ENCODE measurements at regions of chr7 and their contacts with region 1.

Region 1: GRCh38 chr7:12686894-12687717 is at the start of gene ARL4A:
- DNase-seq: peak; percentile 99
- H3K4me3 ChIP-seq: peak within 1 kb of the TSS; percentile 83
- H3K4me3 Mint-ChIP-seq: peak within 1 kb of the TSS; percentile 93
- H3K27ac Mint-ChIP-seq: peak within 1 kb of the TSS; percentile 89
- H3K4me1 ChIP-seq: peaks cover 7% of the 10 kb centered on the region
- H3K4me1 Mint-ChIP-seq: peaks cover 19% of the 10 kb centered on the region
- H3K27me3 ChIP-seq: no peaks in the 10 kb centered on the region
- H3K27me3 Mint-ChIP-seq: no peaks in the 10 kb centered on the region
- CTCF ChIP-seq: peak in 1 of 2 experiments; percentile 61
- total RNA-seq, gene ARL4A: 40.6 and 42.5 TPM in 2 replicates

Region 2: GRCh38 chr7:12557282-12557681 is 129.8 kb before region 1 on chr7:
- CTCF ChIA-PET with region 1: no interaction called
- POLR2A ChIA-PET with region 1: no interaction called
- intact Hi-C with region 1: no loop called
- DNase-seq: no peak
- H3K4me3 ChIP-seq: no peak overlapping the region
- H3K4me3 Mint-ChIP-seq: no peak overlapping the region
- H3K27ac Mint-ChIP-seq: no peak overlapping the region
- H3K4me1 ChIP-seq: peaks cover 14% of the 10 kb centered on the region
- H3K4me1 Mint-ChIP-seq: no peaks in the 10 kb centered on the region
- H3K27me3 ChIP-seq: no peaks in the 10 kb centered on the region
- H3K27me3 Mint-ChIP-seq: no peaks in the 10 kb centered on the region
- CTCF ChIP-seq: no peak

Region 3: DNA sequence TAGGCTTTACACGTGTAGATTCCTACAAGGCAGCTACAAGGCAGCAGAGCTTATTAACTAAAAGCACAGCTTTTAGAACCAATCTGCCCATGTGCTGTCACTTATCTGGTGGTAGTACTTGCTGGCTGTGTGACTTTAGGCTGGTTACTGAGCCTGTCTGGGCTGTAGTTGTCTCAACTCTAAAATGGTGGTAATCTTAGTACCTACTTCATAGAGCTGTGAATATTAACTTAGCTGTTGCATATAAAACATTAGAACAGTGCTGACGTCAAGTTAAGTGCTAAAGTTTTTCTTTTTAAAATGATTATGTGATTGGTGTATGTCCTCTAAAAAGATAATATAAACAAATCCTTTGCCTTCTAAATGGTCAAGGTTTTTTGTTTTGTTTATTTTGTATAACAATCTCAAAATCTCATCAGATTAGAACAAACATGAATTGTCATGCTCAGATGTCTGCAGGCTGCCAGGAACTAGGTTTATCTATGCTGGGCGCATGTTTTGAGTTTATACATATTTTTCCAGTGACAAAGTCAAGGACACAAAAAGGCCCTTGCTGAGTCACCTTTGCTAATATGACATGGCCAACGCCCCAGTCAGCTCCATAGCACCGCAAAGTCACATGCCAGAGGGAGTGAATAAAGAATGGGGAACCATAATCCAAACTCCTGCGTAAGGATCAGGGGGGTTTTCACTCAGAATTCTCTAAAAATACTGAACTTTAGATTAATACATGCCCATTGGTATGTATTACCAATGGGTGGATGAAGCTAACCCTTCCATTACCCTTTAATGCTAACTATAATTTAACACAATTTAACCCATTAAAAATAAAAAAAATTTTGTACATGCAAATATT is 39.5 kb before region 1 on chr7:
- CTCF ChIA-PET with region 1: no interaction called
- POLR2A ChIA-PET with region 1: no interaction called
- intact Hi-C with region 1: no loop called
- DNase-seq: peak; percentile 30 to 48
- H3K4me3 ChIP-seq: no peak overlapping the region
- H3K4me3 Mint-ChIP-seq: no peak overlapping the region
- H3K27ac Mint-ChIP-seq: no peak overlapping the region
- H3K4me1 ChIP-seq: peaks cover 12% of the 10 kb centered on the region
- H3K4me1 Mint-ChIP-seq: peaks cover 12% of the 10 kb centered on the region
- H3K27me3 ChIP-seq: no peaks in the 10 kb centered on the region
- H3K27me3 Mint-ChIP-seq: no peaks in the 10 kb centered on the region
- CTCF ChIP-seq: no peak

Region 4: GRCh38 chr7:12674849-12675248 is 12.3 kb before region 1 on chr7:
- CTCF ChIA-PET with region 1: interaction called, 12 read pairs
- POLR2A ChIA-PET with region 1: interaction called, 7 read pairs
- intact Hi-C with region 1: no loop called
- DNase-seq: peak; percentile 49 to 72
- H3K4me3 ChIP-seq: no peak overlapping the region
- H3K4me3 Mint-ChIP-seq: no peak overlapping the region
- H3K27ac Mint-ChIP-seq: no peak overlapping the region
- H3K4me1 ChIP-seq: no peaks in the 10 kb centered on the region; the same call in 1 of the 2 replicates
- H3K4me1 Mint-ChIP-seq: peaks cover 19% of the 10 kb centered on the region
- H3K27me3 ChIP-seq: no peaks in the 10 kb centered on the region
- H3K27me3 Mint-ChIP-seq: no peaks in the 10 kb centered on the region
- CTCF ChIP-seq: peak; percentile 44 to 59

Region 5: DNA sequence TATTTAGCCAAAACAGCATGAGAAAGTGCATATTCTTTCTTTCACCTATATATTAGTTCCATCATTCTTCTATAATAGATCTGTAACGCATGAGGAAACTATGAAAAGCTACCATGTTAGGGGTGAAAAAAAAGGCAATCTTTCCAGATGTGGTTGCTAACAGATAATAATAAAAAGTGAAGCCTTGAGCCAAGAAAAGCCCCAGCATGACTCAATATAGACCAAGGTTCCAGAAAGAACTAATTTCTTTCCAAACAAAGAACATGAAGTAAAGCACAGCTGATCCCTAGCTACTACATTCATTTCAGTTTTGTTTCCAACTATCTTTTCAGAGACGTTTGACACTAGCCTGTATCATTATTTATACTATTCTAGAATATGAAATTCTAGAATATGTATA is 16.8 kb after region 1 on chr7:
- CTCF ChIA-PET with region 1: no interaction called
- POLR2A ChIA-PET with region 1: no interaction called
- intact Hi-C with region 1: no loop called
- DNase-seq: no peak
- H3K4me3 ChIP-seq: no peak overlapping the region
- H3K4me3 Mint-ChIP-seq: no peak overlapping the region
- H3K27ac Mint-ChIP-seq: no peak overlapping the region
- H3K4me1 ChIP-seq: peaks cover 7% of the 10 kb centered on the region; the same call in 1 of the 2 replicates
- H3K4me1 Mint-ChIP-seq: peaks cover 7% of the 10 kb centered on the region
- H3K27me3 ChIP-seq: no peaks in the 10 kb centered on the region
- H3K27me3 Mint-ChIP-seq: no peaks in the 10 kb centered on the region
- CTCF ChIP-seq: no peak

Region 6: GRCh38 chr7:12802098-12802497 is 115.0 kb after region 1 on chr7:
- CTCF ChIA-PET with region 1: interaction called, 5 read pairs
- POLR2A ChIA-PET with region 1: no interaction called
- intact Hi-C with region 1: loop called (anchors 1 kb)
- DNase-seq: peak in 1 of 2 experiments; percentile 10
- H3K4me3 ChIP-seq: no peak overlapping the region
- H3K4me3 Mint-ChIP-seq: peak overlapping the region; percentile 4
- H3K27ac Mint-ChIP-seq: peak overlapping the region; percentile 71
- H3K4me1 ChIP-seq: peaks cover 44% of the 10 kb centered on the region
- H3K4me1 Mint-ChIP-seq: peaks cover 33% of the 10 kb centered on the region
- H3K27me3 ChIP-seq: no peaks in the 10 kb centered on the region
- H3K27me3 Mint-ChIP-seq: no peaks in the 10 kb centered on the region
- CTCF ChIP-seq: no peak

Region 7: GRCh38 chr7:12942609-12943008 is 255.5 kb after region 1 on chr7:
- CTCF ChIA-PET with region 1: interaction called, 11 read pairs
- POLR2A ChIA-PET with region 1: interaction called, 9 read pairs
- intact Hi-C with region 1: loop called (anchors 2 kb)
- DNase-seq: peak; percentile 39 to 62
- H3K4me3 ChIP-seq: no peak overlapping the region
- H3K4me3 Mint-ChIP-seq: peak overlapping the region; percentile 21
- H3K27ac Mint-ChIP-seq: no peak overlapping the region
- H3K4me1 ChIP-seq: peaks cover 37% of the 10 kb centered on the region
- H3K4me1 Mint-ChIP-seq: peaks cover 44% of the 10 kb centered on the region
- H3K27me3 ChIP-seq: no peaks in the 10 kb centered on the region
- H3K27me3 Mint-ChIP-seq: no peaks in the 10 kb centered on the region
- CTCF ChIP-seq: no peak

Region 8: DNA sequence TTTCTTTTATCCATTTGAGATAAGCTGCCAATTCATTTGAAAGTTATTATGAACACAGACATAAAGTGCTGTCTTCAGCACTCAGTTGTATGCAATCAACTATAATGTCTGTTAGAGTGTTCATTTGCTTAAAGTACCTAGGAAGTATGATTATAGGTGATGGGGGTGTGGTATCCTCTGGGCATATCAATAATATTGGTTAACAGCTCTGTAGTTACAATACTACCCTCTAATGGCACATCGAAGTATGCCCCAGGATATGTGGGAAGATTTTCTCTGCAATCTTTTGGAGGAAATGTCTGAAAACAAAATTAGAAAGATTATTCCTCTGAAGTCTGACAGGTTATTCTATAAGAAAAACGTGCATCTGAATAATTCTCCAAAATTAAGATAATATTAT is 430.0 kb after region 1 on chr7:
- CTCF ChIA-PET with region 1: interaction called, 31 read pairs
- POLR2A ChIA-PET with region 1: interaction called, 10 read pairs
- intact Hi-C with region 1: loop called (anchors 1 kb)
- DNase-seq: peak in 1 of 2 experiments; percentile 19
- H3K4me3 ChIP-seq: no peak overlapping the region
- H3K4me3 Mint-ChIP-seq: no peak overlapping the region
- H3K27ac Mint-ChIP-seq: peak overlapping the region; percentile 44
- H3K4me1 ChIP-seq: peaks cover 31% of the 10 kb centered on the region
- H3K4me1 Mint-ChIP-seq: peaks cover 27% of the 10 kb centered on the region
- H3K27me3 ChIP-seq: no peaks in the 10 kb centered on the region
- H3K27me3 Mint-ChIP-seq: no peaks in the 10 kb centered on the region
- CTCF ChIP-seq: peak; percentile 15 to 44

Region 9: DNA sequence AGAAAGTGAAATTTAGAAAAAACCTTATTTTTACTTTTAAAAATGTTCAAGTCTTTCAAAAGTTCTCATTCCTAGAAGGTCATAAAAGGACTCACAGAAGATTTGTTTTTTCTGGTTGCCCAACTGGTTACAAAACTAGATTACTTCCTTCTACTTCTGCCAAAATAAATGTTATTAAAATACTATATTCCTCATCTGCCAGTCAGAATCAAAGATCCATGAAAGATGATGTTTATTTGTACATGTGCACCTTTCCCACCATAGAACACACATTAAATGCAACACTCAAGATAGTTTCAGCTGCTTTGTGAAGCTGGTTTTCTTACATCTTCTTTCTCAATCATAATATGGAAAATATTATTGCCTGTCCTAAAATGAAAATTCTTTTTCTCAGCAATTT is 837.0 kb after region 1 on chr7:
- CTCF ChIA-PET with region 1: no interaction called
- POLR2A ChIA-PET with region 1: no interaction called
- intact Hi-C with region 1: loop called (anchors 10 kb)
- DNase-seq: no peak
- H3K4me3 ChIP-seq: no peak overlapping the region
- H3K4me3 Mint-ChIP-seq: no peak overlapping the region
- H3K27ac Mint-ChIP-seq: no peak overlapping the region
- H3K4me1 ChIP-seq: no peaks in the 10 kb centered on the region
- H3K4me1 Mint-ChIP-seq: no peaks in the 10 kb centered on the region
- H3K27me3 ChIP-seq: no peaks in the 10 kb centered on the region
- H3K27me3 Mint-ChIP-seq: no peaks in the 10 kb centered on the region
- CTCF ChIP-seq: no peak

Measured in Caco-2 (cell line).